GM13977 (cell line): ENCODE measurements at regions of chr10 and their contacts with region 1.

Region 1: GRCh38 chr10:119859420-119860258 is 13.0 kb downstream of the MCMBP start:
- DNase-seq: peak; percentile 39
- CTCF ChIP-seq: peak; percentile 57

Region 2: DNA sequence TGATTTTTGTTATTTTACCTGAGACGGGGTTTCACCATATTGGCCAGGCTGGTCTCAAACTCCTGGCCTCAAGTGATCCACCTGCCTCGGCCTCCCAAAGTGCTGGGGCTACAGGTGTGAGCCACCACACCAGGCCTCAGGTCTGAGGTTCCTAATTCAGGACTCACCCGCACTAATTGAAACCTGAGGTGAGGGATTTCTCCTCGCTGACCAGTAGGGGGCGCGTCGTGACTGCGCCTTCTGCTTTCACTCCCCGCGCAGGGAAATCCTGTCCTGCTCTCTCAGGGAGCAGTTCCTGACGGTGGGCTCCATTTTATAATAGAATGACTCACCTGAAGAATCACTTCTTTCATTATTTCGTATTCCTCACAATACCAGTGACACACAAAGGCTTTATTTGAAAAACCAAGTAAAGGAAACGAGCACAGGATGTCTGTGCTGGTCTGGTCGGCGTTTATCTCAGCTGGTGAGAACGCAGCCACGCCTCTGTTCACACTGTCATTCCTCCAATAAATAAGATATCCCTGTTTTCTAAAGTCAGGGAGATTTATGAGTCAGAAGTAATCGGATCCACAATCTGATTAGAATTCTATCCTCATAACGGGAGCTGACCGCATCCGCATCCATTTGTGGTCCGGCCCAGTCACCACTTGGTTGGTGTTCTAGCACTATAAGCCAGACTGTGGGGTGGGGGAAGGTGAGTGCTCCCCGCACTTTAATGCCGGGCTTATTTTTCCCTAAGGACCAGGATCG is 173.0 kb before region 1 on chr10:
- in situ Hi-C with region 1: loop called (anchors 10 kb)
- DNase-seq: peak; percentile 78
- CTCF ChIP-seq: peak; percentile 95